ENCODE measurements at regions of chr1 and their contacts with region 1.

Region 1: DNA sequence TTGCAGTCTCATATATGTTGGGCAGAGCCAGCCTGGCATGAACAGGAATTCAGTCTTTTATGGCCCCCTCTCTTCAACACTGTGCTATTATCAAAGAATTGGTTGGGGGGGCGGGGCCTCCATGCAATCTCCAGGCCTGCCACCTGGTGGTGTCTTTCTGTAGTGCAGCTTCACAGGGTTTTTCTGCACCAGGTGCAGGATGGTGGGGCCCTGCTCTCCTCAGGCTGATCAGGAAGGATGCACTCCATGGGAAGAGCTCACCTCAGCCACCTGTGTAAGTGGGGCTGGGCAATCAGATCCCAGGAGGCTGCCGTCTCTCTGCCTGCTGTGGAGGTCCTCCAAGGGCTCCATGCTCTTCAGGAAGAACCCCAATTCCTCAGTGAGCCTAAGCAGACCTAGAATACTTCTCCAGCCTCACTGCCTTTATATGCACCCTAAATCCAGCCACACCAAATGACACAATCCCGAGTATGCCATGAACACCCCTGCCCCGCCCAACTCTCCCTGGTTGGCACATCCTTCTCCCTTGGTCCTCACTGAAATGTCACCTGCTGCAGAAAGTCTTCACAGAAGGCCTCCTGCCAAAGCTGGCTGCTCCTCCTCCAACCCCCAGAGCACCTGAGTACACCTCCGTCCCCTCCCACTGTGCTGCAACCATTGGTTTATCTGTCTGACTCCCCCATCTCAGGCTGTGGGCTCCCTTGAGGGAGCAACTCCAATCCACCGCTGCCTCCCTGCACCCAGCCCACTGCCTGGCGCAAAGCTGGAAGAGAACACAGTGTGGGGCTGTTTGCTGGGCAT is 16.5 kb downstream of the STK40 start:
- DNase-seq: peak; percentile 81 to 91
- ATAC-seq: peak; percentile 64 to 80 (median 75)
- H3K4me3 ChIP-seq: no peak overlapping the region
- H3K4me3 Mint-ChIP-seq: no peak overlapping the region
- H3K27ac ChIP-seq: peak overlapping the region; percentile 20
- H3K27ac Mint-ChIP-seq: peak overlapping the region; percentile 73 to 74
- H3K4me1 ChIP-seq: peaks cover 67% of the 10 kb centered on the region
- H3K4me1 Mint-ChIP-seq: peaks cover 41 to 63% of the 10 kb centered on the region in 2 donors
- H3K27me3 ChIP-seq: no peaks in the 10 kb centered on the region
- H3K27me3 Mint-ChIP-seq: no peaks in the 10 kb centered on the region
- CTCF ChIP-seq: peak; percentile 90

Region 2: DNA sequence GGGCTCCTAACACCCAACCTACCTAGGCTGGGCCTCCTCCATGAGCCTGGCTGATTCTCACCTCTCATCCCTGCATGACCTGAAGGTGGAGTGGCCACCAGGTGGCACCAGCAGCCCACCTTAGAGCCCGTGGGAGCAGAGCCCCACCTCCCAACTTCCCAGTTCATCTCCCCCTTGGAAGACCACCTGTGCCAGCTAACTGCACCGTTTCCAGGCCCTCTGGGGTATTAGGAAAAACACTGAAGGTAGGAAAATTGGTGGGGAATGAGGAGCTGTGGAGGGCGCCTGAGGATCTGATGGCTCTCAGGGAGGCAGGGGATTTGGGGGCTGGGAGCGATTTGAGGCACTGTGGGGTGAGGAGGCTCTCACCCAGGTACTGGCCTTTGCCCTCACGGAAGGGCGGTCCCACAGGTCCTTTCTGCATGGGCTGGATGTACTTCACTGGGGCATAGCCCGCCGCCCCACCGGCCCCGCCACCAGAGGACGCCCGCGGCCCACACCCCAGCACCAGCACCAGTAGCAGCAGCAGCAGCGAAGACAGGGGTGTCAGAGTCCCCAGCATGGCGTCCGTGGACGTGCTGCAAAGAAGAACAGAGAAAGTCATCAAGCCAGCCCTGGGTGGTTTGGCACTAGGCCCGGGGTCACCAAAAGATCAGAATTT is 269.4 kb before region 1 on chr1:
- intact Hi-C with region 1: no loop called
- DNase-seq: peak; percentile 68 to 86
- ATAC-seq: peak; percentile 81 to 92 (median 89)
- H3K4me3 ChIP-seq: no peak overlapping the region
- H3K4me3 Mint-ChIP-seq: no peak overlapping the region
- H3K27ac ChIP-seq: no peak overlapping the region
- H3K27ac Mint-ChIP-seq: no peak overlapping the region
- H3K4me1 ChIP-seq: peaks cover 10% of the 10 kb centered on the region
- H3K4me1 Mint-ChIP-seq: peaks cover 0 to 5% of the 10 kb centered on the region in 2 donors
- H3K27me3 ChIP-seq: no peaks in the 10 kb centered on the region
- H3K27me3 Mint-ChIP-seq: no peaks in the 10 kb centered on the region
- CTCF ChIP-seq: peak; percentile 83

Region 3: GRCh38 chr1:36306902-36307456 is 62.3 kb before region 1 on chr1:
- intact Hi-C with region 1: loop called (anchors 5 kb)
- DNase-seq: peak; percentile 89 to 96
- ATAC-seq: peak; percentile 96 to 99 (median 97)
- H3K4me3 ChIP-seq: peak overlapping the region; percentile 48
- H3K4me3 Mint-ChIP-seq: peak overlapping the region; percentile 95
- H3K27ac ChIP-seq: peak overlapping the region; percentile 3
- H3K27ac Mint-ChIP-seq: peak overlapping the region; percentile 62 to 83
- H3K4me1 ChIP-seq: peaks cover 24% of the 10 kb centered on the region
- H3K4me1 Mint-ChIP-seq: peaks cover 14 to 30% of the 10 kb centered on the region in 2 donors
- H3K27me3 ChIP-seq: no peaks in the 10 kb centered on the region
- H3K27me3 Mint-ChIP-seq: no peaks in the 10 kb centered on the region
- CTCF ChIP-seq: no peak

Region 4: DNA sequence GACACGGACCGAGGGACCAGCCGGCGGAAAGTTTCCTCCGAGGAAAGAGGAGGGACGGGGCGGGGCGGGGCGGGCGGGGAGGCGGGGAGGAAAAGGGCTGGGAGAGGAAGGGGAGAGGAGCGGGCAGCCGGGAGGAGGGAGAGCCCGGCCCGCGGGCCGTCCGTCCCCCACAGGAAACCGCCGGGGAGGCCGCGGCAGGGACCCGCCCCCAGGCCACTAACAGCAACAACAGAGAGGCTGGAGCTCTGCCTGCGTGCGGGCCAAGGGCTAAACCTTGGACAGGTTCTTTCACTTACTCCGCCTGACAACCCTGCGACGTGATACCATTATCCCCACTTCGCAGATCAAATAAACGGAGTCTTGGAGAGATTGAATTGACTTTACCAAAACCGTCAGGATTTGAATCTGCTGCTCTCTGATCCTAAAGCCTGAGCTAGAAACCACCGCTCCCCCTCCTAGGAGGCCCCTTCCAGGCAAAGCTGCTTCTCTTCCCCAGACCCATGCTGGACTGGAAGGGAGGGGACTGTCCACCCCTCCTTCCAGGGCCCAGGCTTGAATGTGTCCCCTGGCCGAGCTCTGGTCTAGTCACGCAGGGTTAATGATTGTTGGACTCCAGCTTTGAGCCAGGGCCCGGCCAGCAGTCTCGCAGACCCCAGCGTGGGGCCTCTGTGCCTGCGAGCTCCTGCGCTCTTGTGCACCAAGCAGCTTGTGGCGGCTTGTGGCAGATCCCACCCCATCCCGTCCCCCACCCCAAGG is 45.5 kb before region 1 on chr1 and contains the start of gene EVA1B:
- intact Hi-C with region 1: loop called (anchors 5 kb)
- DNase-seq: peak; percentile 48 to 60
- ATAC-seq: peak; percentile 60 to 66 (median 61)
- H3K4me3 ChIP-seq: peak within 1 kb of the TSS; percentile 55
- H3K4me3 Mint-ChIP-seq: peak within 1 kb of the TSS; percentile 85
- H3K27ac ChIP-seq: peak within 1 kb of the TSS; percentile 46
- H3K27ac Mint-ChIP-seq: peak within 1 kb of the TSS; percentile 41 to 73
- H3K4me1 ChIP-seq: peaks cover 41% of the 10 kb centered on the region
- H3K4me1 Mint-ChIP-seq: peaks cover 6 to 35% of the 10 kb centered on the region in 2 donors
- H3K27me3 ChIP-seq: no peaks in the 10 kb centered on the region
- H3K27me3 Mint-ChIP-seq: peaks cover 0 to 7% of the 10 kb centered on the region in 2 donors
- CTCF ChIP-seq: no peak
- total RNA-seq, gene EVA1B: 4.0 to 8.0 (median 4.9) TPM

Region 5: GRCh38 chr1:36397378-36398230 is 28.3 kb after region 1 on chr1 and contains the start of gene LSM10:
- intact Hi-C with region 1: loop called (anchors 5 kb)
- DNase-seq: peak; percentile 85 to 96
- ATAC-seq: peak; percentile 59 to 72 (median 60)
- H3K4me3 ChIP-seq: peak within 1 kb of the TSS; percentile 98
- H3K4me3 Mint-ChIP-seq: peak within 1 kb of the TSS; percentile 100
- H3K27ac ChIP-seq: peak within 1 kb of the TSS; percentile 93
- H3K27ac Mint-ChIP-seq: peak within 1 kb of the TSS; percentile 99 to 100
- H3K4me1 ChIP-seq: peaks cover 55% of the 10 kb centered on the region
- H3K4me1 Mint-ChIP-seq: peaks cover 46 to 48% of the 10 kb centered on the region in 2 donors
- H3K27me3 ChIP-seq: no peaks in the 10 kb centered on the region
- H3K27me3 Mint-ChIP-seq: no peaks in the 10 kb centered on the region
- CTCF ChIP-seq: no peak
- total RNA-seq, gene LSM10: 25.2 to 30.4 (median 26.6) TPM